BJ (cell line): ENCODE measurements at regions of chr12 and their contacts with region 1.

Region 1: GRCh38 chr12:72346363-72346944 is 74.3 kb downstream of the TRHDE start:
- DNase-seq: no peak
- H3K4me3 ChIP-seq: no peak overlapping the region
- H3K27me3 ChIP-seq: no peaks in the 10 kb centered on the region
- CTCF ChIP-seq: peak; percentile 66

Region 2: DNA sequence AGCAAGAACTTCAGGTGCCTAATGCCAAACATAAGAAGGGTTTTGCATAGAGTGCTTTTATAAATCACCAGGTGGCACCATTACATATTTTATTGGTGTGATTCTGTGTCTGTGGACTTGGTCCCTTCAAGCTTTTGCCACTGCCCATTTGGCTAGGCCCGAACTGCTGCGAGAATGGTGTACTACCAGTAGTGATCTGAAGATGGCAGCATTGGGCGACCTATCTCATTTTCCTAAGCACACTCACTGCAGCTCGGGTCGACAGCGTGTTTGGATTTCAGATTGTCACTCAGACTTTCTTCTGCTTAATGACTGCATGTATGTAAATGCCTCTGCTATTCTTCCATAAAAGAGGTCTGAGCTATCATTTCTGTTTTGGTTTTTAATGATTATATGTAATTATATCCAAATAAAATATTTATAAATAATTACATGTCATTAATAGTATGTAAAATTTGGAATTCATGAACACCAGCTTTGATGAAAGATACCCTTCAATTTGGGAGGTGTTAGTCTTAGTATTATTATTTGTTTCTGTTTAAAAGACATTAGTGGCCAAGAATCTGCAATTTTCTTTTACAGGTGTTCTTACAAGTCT is 329.3 kb before region 1 on chr12:
- CTCF ChIA-PET with region 1: interaction called, 11 read pairs
- POLR2A ChIA-PET with region 1: no interaction called
- DNase-seq: peak; percentile 26
- H3K4me3 ChIP-seq: no peak overlapping the region
- H3K27me3 ChIP-seq: peaks cover 3% of the 10 kb centered on the region; the same call in 1 of the 2 replicates
- CTCF ChIP-seq: peak; percentile 77

Region 3: GRCh38 chr12:72330301-72330700 is 16.2 kb before region 1 on chr12:
- CTCF ChIA-PET with region 1: interaction called, 15 read pairs
- POLR2A ChIA-PET with region 1: no interaction called
- DNase-seq: peak; percentile 47
- H3K4me3 ChIP-seq: peak overlapping the region; percentile 20
- H3K27me3 ChIP-seq: no peaks in the 10 kb centered on the region
- CTCF ChIP-seq: 0 out of 2 replicates have a peak, but pooled peaks have one; percentile 8